Sigmoid colon (tissue), 7 donors: ENCODE measurements at regions of chr3 and their contacts with region 1.

Region 1: GRCh38 chr3:86990734-86991481 is at the start of gene VGLL3:
- DNase-seq: peak; percentile 93
- H3K4me3 ChIP-seq: peak within 1 kb of the TSS; percentile 76 to 84 (median 80)
- H3K27ac ChIP-seq: peak within 1 kb of the TSS; percentile 85 to 98 (median 92)
- H3K4me1 ChIP-seq: peaks cover 0 to 39% (median 22%) of the 10 kb centered on the region in 4 donors
- H3K27me3 ChIP-seq: no peaks in the 10 kb centered on the region
- CTCF ChIP-seq: peak in 1 of 4 experiments; percentile 23
- EP300 ChIP-seq: no peak
- POLR2A ChIP-seq: peak; percentile 23 to 49
- total RNA-seq, gene VGLL3: 24.0 to 35.0 (median 31.6) TPM

Region 2: DNA sequence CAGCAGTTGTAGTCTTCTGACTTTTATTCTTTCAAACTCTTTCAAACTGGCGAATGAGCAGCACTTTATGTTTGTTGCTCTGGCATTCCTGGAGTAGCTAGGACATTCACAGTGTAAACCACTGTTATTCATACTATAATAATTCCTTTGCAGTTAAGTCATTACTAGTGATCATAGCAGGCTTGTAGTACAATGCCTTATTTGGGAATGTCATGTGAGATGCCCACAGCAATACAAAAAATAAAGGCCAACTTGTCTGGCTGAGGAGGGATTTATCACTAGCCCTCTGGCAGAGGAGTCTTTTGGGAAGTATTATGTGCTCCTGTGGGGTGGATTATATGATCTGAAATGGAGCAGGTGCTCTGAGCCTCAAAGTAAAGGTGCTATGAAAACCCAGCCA is 197.1 kb before region 1 on chr3:
- intact Hi-C with region 1: loop called (anchors 5 kb)
- DNase-seq: no peak
- H3K4me3 ChIP-seq: no peak overlapping the region
- H3K27ac ChIP-seq: peak overlapping the region; percentile 76 to 87 (median 82)
- H3K4me1 ChIP-seq: peaks cover 0 to 21% (median 16%) of the 10 kb centered on the region in 4 donors
- H3K27me3 ChIP-seq: no peaks in the 10 kb centered on the region
- CTCF ChIP-seq: no peak
- EP300 ChIP-seq: peak in 3 of 4 donors; percentile 44 to 75 (median 73)
- POLR2A ChIP-seq: peak; percentile 23

Region 3: GRCh38 chr3:86814918-86815655 is 175.8 kb before region 1 on chr3:
- intact Hi-C with region 1: no loop called
- DNase-seq: no peak
- H3K4me3 ChIP-seq: no peak overlapping the region
- H3K27ac ChIP-seq: peak overlapping the region in 2 of 4 donors; percentile 11 to 20
- H3K4me1 ChIP-seq: peaks cover 0 to 7% (median 0%) of the 10 kb centered on the region in 4 donors
- H3K27me3 ChIP-seq: no peaks in the 10 kb centered on the region
- CTCF ChIP-seq: no peak
- EP300 ChIP-seq: no peak
- POLR2A ChIP-seq: no peak

Region 4: DNA sequence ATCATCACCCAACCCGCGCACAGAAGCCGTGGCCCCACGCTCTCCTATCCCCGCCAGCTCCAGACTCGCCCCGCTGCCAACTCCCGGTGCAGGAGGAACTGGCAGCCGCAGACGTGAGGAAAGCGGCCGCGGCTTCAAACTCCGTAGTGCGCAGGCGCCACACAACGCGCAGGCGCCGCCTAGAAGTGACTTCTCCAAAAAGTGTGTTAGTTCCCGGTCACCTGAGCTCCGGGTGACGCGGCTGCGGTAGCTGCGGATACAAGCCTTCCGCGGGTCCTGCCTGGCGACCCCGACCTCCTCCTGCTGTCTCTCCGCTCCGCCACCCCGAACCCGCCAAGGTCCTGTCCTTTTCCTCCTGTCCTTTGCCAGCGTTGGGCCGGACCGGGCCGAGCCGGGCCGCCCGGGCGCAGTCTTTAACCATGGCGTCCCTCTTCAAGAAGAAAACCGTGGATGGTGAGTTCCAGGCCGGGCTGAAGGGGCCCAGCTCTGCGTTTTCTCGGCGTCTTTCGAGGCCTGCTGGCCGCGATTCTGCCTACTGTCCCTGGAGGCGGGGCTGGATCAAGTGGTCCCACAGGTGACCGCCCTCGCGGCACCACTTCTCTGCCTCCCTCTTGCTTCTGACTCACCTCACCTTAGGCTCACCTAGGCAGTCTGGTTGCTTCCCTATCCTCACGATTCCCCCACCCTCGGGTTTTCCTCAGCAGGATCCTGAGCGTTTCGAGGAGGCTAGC is 236.4 kb after region 1 on chr3 and contains the start of gene CHMP2B:
- intact Hi-C with region 1: loop called (anchors 1 kb)
- DNase-seq: peak; percentile 97
- H3K4me3 ChIP-seq: peak within 1 kb of the TSS; percentile 76 to 99 (median 95)
- H3K27ac ChIP-seq: peak within 1 kb of the TSS; percentile 89 to 97 (median 94)
- H3K4me1 ChIP-seq: peaks cover 0 to 38% (median 26%) of the 10 kb centered on the region in 4 donors
- H3K27me3 ChIP-seq: no peaks in the 10 kb centered on the region
- CTCF ChIP-seq: no peak
- EP300 ChIP-seq: no peak
- POLR2A ChIP-seq: peak; percentile 75 to 83
- total RNA-seq, gene CHMP2B: 33.2 to 50.3 (median 41.9) TPM